CD4-positive, alpha-beta memory T cell (primary cell): ENCODE measurements at regions of chr18 and their contacts with region 1.

Region 1: DNA sequence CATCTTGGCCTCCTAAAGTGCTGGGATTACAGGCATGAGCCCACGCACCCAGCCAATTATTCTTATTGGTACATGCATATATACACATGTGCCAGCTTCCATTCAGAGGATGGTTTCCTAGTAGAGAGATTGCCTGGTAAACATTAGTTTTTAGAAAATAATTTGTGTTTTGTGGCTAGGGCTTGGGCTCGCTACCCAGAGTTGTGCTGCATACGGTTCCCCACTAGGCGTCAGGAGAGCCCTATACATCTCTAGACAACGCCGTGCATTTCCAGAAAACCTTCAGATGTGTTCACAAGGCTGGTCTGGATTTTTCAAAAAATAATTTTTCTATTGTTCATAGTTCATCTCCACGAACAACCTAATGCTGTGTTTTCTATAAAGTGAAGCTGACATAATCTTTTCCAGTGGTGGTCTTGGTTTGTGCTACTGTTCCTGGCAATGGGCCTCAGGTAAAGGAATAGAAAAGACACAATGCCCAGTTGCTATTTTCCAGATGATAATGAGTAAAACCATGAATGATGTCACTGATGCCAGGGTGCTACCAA is 14.7 kb upstream of the AFG3L2 start:
- DNase-seq: peak in 4 of 5 donors; percentile 45 to 52 (median 50)
- H3K4me3 ChIP-seq: no peak overlapping the region
- H3K4me3 Mint-ChIP-seq: no peak overlapping the region
- H3K27ac ChIP-seq: no peak overlapping the region
- H3K27ac Mint-ChIP-seq: no peak overlapping the region
- H3K4me1 ChIP-seq: no peaks in the 10 kb centered on the region
- H3K4me1 Mint-ChIP-seq: no peaks in the 10 kb centered on the region
- H3K27me3 ChIP-seq: no peaks in the 10 kb centered on the region
- H3K27me3 Mint-ChIP-seq: peaks cover 5 to 12% of the 10 kb centered on the region in 2 donors

Region 2: GRCh38 chr18:12401856-12402255 is 10.2 kb after region 1 on chr18:
- CTCF ChIA-PET with region 1: interaction called, 26 read pairs
- POLR2A ChIA-PET with region 1: no interaction called
- intact Hi-C with region 1: no loop called
- DNase-seq: no peak
- H3K4me3 ChIP-seq: no peak overlapping the region
- H3K4me3 Mint-ChIP-seq: peak overlapping the region in 1 of 8 donors; percentile 51
- H3K27ac ChIP-seq: no peak overlapping the region
- H3K27ac Mint-ChIP-seq: no peak overlapping the region
- H3K4me1 ChIP-seq: peaks cover 10% of the 10 kb centered on the region
- H3K4me1 Mint-ChIP-seq: peaks cover 4 to 19% (median 8%) of the 10 kb centered on the region in 4 donors
- H3K27me3 ChIP-seq: peaks cover 5% of the 10 kb centered on the region
- H3K27me3 Mint-ChIP-seq: peaks cover 30 to 40% of the 10 kb centered on the region in 2 donors

Region 3: DNA sequence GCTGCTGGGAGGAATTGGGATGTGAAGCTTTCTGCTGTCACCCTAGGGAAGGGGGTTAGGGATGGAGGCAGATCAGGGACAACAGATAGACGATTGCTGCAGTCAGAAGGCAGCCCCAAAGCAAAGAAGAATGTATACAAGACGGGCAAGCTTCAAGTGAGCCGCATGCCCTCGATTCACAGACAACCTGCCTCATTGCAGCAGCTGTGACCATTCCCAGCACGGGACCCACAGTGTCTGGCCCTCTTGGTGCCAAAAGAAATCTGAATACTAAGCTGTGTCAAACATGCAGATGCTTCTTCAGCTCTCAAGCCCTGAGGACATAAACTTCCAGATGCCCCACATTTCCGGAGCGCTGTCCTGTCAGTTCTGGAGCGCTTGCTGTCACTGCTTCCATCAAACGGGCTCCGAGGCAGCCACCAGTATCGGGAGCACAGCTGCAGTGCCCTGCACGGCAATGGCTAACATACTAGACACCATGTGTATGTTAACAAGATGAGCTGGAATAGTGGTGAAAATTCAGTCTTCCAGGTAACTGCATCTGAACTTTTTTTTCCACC is 49.9 kb after region 1 on chr18:
- CTCF ChIA-PET with region 1: no interaction called
- POLR2A ChIA-PET with region 1: no interaction called
- intact Hi-C with region 1: no loop called
- DNase-seq: no peak
- H3K4me3 ChIP-seq: no peak overlapping the region
- H3K4me3 Mint-ChIP-seq: no peak overlapping the region
- H3K27ac ChIP-seq: no peak overlapping the region
- H3K27ac Mint-ChIP-seq: no peak overlapping the region
- H3K4me1 ChIP-seq: no peaks in the 10 kb centered on the region
- H3K4me1 Mint-ChIP-seq: no peaks in the 10 kb centered on the region
- H3K27me3 ChIP-seq: no peaks in the 10 kb centered on the region
- H3K27me3 Mint-ChIP-seq: no peaks in the 10 kb centered on the region

Region 4: DNA sequence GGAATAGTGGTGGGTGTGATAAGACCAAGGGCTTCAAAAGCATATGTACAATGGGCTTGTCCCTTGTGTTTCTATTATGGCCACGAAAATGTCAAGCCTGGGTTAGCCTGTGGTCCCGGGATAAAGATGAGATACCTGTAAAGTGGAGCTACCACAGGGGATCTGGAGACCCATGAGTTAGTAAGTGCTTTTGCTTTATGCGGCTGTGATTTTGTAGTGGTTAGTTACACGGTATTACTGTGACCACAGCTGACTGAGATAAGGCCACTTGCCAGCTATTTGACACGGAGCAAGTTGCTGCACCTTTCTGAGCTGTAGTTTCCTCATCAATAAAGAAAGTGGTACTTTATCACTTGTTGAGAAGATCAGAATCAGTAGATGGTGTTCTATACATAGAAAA is 115.3 kb after region 1 on chr18:
- CTCF ChIA-PET with region 1: no interaction called
- POLR2A ChIA-PET with region 1: no interaction called
- intact Hi-C with region 1: no loop called
- DNase-seq: no peak
- H3K4me3 ChIP-seq: no peak overlapping the region
- H3K4me3 Mint-ChIP-seq: no peak overlapping the region
- H3K27ac ChIP-seq: no peak overlapping the region
- H3K27ac Mint-ChIP-seq: no peak overlapping the region
- H3K4me1 ChIP-seq: no peaks in the 10 kb centered on the region
- H3K4me1 Mint-ChIP-seq: no peaks in the 10 kb centered on the region
- H3K27me3 ChIP-seq: no peaks in the 10 kb centered on the region
- H3K27me3 Mint-ChIP-seq: no peaks in the 10 kb centered on the region

Region 5: GRCh38 chr18:12543697-12544096 is 152.0 kb after region 1 on chr18:
- CTCF ChIA-PET with region 1: no interaction called
- POLR2A ChIA-PET with region 1: no interaction called
- intact Hi-C with region 1: no loop called
- DNase-seq: no peak
- H3K4me3 ChIP-seq: no peak overlapping the region
- H3K4me3 Mint-ChIP-seq: no peak overlapping the region
- H3K27ac ChIP-seq: no peak overlapping the region
- H3K27ac Mint-ChIP-seq: no peak overlapping the region
- H3K4me1 ChIP-seq: no peaks in the 10 kb centered on the region
- H3K4me1 Mint-ChIP-seq: peaks cover 0 to 2% (median 0%) of the 10 kb centered on the region in 4 donors
- H3K27me3 ChIP-seq: no peaks in the 10 kb centered on the region
- H3K27me3 Mint-ChIP-seq: no peaks in the 10 kb centered on the region

Region 6: DNA sequence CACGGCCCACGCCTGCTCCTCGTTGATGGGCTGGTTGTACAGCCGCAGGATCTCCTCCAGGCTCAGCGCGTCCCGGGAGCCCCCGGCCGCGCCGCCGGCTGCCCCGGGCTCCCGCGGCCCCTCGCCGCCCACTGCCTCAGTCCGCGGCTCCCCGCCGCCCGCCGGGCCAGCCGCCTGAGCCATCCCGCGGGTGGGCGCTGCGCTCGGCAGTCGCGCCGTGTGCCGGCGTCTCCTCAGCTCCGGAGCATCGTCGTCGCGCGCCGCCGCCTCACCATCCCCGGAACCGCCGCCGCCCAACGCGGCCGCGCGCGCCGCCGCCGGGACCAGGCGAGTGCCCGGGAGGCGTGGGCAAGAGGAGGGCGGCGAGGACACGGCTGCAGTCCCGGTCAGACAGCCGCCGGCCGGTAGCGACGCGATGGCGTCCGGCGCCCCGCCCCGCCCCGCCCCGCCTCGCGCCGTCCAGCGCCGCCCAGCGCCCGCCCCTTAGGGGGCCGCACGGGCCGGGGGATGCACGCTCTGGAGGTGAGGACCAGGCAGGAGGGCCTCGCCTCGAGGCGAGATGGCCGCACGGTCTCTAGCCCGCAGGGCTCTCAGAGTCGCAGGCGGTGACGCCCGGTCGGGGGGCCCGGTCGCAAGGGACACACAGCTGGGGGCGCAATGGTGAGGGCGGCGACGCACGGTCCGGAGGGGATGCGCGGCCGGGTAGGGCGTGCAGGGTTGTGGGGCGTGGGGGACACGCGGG is 266.2 kb after region 1 on chr18 and contains the start of gene SPIRE1:
- CTCF ChIA-PET with region 1: interaction called, 57 read pairs
- POLR2A ChIA-PET with region 1: no interaction called
- intact Hi-C with region 1: loop called (anchors 1 kb)
- DNase-seq: peak in 4 of 5 donors; percentile 32 to 43 (median 39)
- H3K4me3 ChIP-seq: peak within 1 kb of the TSS; percentile 42 to 63
- H3K4me3 Mint-ChIP-seq: peak within 1 kb of the TSS; percentile 84 to 94 (median 92)
- H3K27ac ChIP-seq: no peak within 1 kb of the TSS
- H3K27ac Mint-ChIP-seq: peak within 1 kb of the TSS; percentile 11 to 87 (median 75)
- H3K4me1 ChIP-seq: peaks cover 9% of the 10 kb centered on the region
- H3K4me1 Mint-ChIP-seq: peaks cover 13 to 21% (median 17%) of the 10 kb centered on the region in 4 donors
- H3K27me3 ChIP-seq: no peaks in the 10 kb centered on the region
- H3K27me3 Mint-ChIP-seq: peaks cover 1 to 2% of the 10 kb centered on the region in 2 donors
- total RNA-seq, gene SPIRE1: 1.7 to 1.8 TPM

Region 7: GRCh38 chr18:12702221-12703095 is 310.8 kb after region 1 on chr18 and contains the starts of genes CEP76 and PSMG2:
- CTCF ChIA-PET with region 1: interaction called, 7 read pairs
- POLR2A ChIA-PET with region 1: no interaction called
- intact Hi-C with region 1: loop called (anchors 5 kb)
- DNase-seq: peak; percentile 84 to 90 (median 87)
- H3K4me3 ChIP-seq: peak within 1 kb of the TSS; percentile 82 to 99
- H3K4me3 Mint-ChIP-seq: peak within 1 kb of the TSS; percentile 87 to 100 (median 98)
- H3K27ac ChIP-seq: peak within 1 kb of the TSS; percentile 93
- H3K27ac Mint-ChIP-seq: peak within 1 kb of the TSS; percentile 89 to 100 (median 96)
- H3K4me1 ChIP-seq: peaks cover 46% of the 10 kb centered on the region
- H3K4me1 Mint-ChIP-seq: peaks cover 32 to 60% (median 48%) of the 10 kb centered on the region in 4 donors
- H3K27me3 ChIP-seq: no peaks in the 10 kb centered on the region
- H3K27me3 Mint-ChIP-seq: no peaks in the 10 kb centered on the region
- total RNA-seq, gene CEP76: 9.9 to 13.1 TPM
- total RNA-seq, gene PSMG2: 59.7 to 62.0 TPM

Region 8: DNA sequence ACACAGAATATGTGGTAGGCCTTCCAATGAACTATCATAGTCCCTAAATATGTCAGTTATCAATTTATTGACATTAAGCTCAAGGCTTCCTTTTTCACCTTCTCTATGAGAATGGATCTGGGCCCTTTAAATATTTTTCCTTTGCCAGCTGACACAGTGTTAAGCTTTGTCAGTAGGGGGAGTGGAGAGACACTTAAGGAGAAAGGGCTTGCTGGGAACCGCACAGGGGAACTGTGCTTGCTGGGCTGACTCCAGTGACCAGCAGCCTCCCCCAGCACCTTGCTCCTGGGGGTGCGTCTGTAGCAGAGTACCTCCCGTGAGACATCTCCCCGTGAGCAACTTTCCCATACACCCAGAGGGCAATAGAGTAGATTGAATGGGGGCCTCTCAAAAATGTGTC is 498.8 kb after region 1 on chr18:
- CTCF ChIA-PET with region 1: interaction called, 6 read pairs
- POLR2A ChIA-PET with region 1: no interaction called
- intact Hi-C with region 1: loop called (anchors 1 kb)
- DNase-seq: no peak
- H3K4me3 ChIP-seq: no peak overlapping the region
- H3K4me3 Mint-ChIP-seq: no peak overlapping the region
- H3K27ac ChIP-seq: no peak overlapping the region
- H3K27ac Mint-ChIP-seq: no peak overlapping the region
- H3K4me1 ChIP-seq: peaks cover 5% of the 10 kb centered on the region
- H3K4me1 Mint-ChIP-seq: peaks cover 3 to 9% (median 8%) of the 10 kb centered on the region in 4 donors
- H3K27me3 ChIP-seq: peaks cover 1% of the 10 kb centered on the region
- H3K27me3 Mint-ChIP-seq: peaks cover 7% of the 10 kb centered on the region in 2 donors